AG04449 (cell line): ENCODE measurements at regions of chr2 and their contacts with region 1.

Region 1: GRCh38 chr2:96509114-96509846 is 4.1 kb upstream of the NEURL3 start:
- DNase-seq: peak; percentile 17
- H3K4me3 ChIP-seq: no peak overlapping the region
- CTCF ChIP-seq: peak; percentile 99

Region 2: DNA sequence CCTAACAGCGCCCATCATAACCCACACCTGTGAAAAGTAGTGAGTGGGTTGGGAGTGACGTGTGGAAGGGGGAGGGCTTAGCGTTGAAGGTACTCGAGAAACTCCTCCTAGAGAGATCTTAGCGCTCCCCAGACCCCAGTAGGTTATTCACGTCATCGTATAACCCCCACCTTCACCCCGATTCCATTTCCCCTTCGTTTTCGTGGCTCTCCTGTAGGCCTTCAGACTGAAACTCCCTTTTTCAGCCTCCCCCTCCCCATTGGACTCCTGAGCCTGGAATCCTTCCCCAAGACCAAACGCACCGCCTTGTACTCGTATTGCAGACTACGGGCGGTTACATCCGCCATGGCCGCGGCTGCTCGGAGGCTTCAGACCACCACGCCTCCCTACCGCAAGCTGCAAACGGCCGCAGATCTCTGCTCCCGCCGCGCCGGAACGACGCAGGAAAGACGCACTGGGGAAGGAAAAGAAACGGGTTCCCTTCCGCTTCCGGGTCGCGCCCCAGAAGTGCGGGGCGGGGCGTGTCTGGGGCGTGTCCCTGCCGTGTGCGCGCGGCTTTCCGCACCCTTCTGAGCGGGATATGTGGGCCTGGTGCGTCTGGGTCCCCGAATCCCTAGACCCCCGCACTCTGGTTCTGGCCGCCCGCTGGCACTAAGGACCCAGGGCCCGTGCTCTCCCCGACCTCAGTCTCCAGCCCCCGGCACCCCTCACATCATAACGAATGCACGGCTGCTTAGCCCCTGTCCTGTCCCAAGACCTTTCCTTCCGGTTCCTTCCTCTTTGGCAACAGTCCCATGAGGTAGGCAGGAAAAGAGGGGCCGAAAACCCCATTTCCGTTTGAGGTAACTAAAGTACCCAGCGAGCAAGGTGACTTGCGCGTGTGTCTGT is 203.9 kb before region 1 on chr2 and contains the start of gene SNRNP200:
- CTCF ChIA-PET with region 1: interaction called, 18 read pairs
- POLR2A ChIA-PET with region 1: no interaction called
- DNase-seq: no peak
- H3K4me3 ChIP-seq: peak within 1 kb of the TSS; percentile 99
- CTCF ChIP-seq: no peak

Region 3: GRCh38 chr2:96407041-96407918 is 102.0 kb before region 1 on chr2:
- CTCF ChIA-PET with region 1: interaction called, 340 read pairs
- POLR2A ChIA-PET with region 1: no interaction called
- DNase-seq: peak; percentile 33
- H3K4me3 ChIP-seq: no peak overlapping the region
- CTCF ChIP-seq: peak; percentile 84

Region 4: DNA sequence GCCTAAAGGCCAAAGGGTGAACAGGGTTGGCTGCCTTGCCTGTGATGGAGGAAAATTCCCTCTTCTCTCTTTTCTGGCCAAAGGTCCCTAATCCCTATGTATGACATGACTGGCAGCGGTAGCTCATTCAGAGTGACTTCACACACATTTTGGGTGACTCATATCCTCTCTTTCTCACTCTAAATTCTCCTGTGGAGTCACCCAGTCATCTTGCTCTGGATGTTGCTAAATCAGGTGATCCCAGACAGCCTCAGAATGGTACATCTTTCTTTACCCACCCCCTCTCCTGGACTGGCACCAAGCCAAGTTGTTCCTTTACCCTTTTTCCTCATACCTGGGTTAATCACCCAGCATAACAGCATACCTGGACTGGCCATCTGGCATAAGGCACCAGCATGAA is 81.4 kb before region 1 on chr2:
- CTCF ChIA-PET with region 1: interaction called, 13 read pairs
- POLR2A ChIA-PET with region 1: no interaction called
- DNase-seq: peak; percentile 28
- H3K4me3 ChIP-seq: no peak overlapping the region
- CTCF ChIP-seq: no peak

Region 5: DNA sequence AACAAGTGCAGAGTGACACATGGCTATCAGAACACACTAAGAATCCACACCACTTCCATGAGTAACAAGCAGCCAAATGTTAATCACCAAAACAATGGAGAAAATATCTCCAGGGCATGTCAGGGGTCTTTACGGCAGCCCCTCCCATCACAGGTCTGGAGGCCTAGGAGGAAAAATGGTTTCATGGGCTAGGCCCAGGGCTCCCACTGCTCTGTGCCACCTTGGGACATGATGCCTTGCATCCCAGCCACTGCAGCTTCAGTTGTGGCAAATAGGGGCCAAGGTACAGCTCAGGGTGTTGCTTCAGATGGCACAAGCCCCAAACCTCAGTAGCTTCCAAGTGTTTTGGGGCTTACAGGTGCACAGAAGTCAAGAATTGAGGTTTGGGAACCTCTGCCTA is 70.7 kb before region 1 on chr2:
- CTCF ChIA-PET with region 1: no interaction called
- POLR2A ChIA-PET with region 1: no interaction called
- DNase-seq: no peak
- H3K4me3 ChIP-seq: no peak overlapping the region
- CTCF ChIP-seq: no peak

Region 6: DNA sequence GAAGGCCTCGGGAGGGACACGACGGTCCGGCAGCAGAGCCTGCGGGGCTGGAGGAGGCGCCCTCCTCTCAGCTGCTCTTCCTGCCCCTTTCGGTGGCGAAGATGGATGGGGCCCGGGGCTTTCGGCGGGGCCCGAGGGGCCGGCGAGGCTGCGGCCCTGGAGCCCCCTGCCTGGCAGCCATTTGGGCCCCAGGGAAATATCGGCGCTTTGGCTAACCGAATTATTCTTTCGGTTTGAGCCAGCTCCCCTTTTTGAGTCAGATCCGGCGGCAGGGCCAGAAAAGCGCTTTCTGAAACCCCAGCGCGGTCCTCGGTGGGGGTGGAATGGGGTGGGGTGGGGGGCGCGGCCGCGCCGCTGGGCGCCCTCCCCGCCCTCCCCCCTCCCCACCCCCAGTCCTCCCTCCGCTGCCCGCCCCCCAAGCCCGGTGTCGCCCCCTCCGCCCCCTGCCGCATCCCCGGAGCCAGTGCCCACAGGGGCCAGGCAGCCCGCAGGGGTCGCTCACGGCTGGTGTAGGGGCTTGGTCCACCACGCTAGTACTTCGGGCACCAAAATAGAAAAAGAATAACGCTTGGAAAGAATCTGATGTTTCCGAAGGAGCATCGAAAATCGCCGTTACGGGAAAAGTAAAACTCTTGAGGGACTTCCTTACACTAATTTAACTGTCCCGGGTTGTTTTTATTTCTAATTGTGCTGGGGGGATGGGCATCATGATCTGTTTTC is 18.2 kb after region 1 on chr2:
- CTCF ChIA-PET with region 1: interaction called, 98 read pairs
- POLR2A ChIA-PET with region 1: no interaction called
- DNase-seq: no peak
- H3K4me3 ChIP-seq: peak overlapping the region; percentile 47
- CTCF ChIP-seq: peak; percentile 65

Region 7: DNA sequence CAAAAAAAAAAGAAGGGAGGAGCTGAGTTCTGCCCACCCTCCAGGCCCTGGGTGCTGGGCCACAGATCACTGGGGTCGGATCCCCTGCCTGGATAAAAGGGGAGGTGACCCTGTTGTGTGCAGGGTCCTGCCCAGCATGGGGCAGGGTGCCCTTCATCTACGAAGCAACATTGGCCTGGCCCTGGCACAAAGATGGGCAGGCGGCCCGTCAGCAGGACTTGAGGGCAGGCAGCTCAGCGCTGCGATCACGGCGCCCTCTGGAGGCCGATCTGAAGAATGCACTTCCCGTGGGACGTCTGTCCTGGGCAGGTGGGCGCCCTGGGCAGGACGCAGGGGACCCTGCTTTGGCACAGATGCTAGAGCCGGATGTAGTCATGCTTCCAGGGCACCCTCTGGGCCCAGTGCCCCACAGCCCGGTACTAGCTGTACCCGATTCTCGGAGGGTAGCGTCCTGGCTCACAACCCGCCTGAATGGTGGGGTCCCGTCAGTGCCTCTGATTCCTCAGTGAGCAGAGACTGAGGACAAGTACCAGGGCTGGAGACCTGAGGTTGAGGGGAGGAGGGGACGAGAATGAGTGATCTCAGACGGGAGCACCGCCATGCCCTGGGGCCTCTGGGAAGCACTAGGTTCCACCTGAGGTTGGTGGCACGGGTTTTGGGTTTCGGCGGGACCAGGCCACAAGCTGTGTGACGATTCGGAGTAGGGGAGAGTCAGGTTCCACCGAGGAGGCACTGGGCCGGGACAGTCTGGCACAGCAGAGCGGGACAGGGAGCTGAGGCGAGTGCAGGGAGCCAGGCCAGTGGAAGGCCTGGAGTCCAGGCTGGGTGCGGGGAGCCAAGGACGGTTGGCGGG is 45.2 kb after region 1 on chr2:
- CTCF ChIA-PET with region 1: interaction called, 17 read pairs
- POLR2A ChIA-PET with region 1: no interaction called
- DNase-seq: no peak
- H3K4me3 ChIP-seq: no peak overlapping the region
- CTCF ChIP-seq: peak; percentile 96

Region 8: DNA sequence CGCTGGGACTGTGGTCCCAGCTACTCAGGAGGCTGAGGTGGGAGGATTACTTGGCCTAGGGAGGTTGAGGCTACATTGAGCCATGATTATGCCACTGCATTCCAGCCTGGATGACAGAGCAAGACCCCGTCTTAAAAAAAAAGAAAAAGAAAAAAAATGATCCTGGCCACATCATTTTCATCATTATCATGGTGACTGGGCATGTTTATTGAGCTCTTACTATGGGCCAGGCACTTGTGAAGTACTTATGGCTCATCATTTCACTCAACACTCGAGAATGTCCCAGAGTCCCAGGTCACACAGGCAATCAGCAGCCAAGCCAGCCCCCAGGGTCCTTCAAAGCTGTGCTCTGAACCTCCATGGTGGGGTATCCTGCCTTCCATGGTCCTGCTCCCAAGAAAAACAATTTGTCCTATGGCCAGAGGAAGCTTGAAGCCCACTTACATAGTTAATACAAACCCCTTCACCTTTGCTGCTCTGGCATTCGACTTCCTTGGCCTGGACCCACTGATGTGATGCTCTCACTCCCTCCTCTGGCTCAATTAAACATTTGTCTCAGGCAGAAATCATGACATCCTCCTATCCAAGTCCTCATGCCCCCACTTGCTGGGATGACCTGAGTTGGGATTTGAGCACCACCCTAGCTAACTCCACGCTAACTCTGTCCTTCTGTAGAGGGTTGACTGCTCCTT is 247.7 kb after region 1 on chr2:
- CTCF ChIA-PET with region 1: no interaction called
- POLR2A ChIA-PET with region 1: no interaction called
- DNase-seq: no peak
- H3K4me3 ChIP-seq: no peak overlapping the region
- CTCF ChIP-seq: no peak

Region 9: DNA sequence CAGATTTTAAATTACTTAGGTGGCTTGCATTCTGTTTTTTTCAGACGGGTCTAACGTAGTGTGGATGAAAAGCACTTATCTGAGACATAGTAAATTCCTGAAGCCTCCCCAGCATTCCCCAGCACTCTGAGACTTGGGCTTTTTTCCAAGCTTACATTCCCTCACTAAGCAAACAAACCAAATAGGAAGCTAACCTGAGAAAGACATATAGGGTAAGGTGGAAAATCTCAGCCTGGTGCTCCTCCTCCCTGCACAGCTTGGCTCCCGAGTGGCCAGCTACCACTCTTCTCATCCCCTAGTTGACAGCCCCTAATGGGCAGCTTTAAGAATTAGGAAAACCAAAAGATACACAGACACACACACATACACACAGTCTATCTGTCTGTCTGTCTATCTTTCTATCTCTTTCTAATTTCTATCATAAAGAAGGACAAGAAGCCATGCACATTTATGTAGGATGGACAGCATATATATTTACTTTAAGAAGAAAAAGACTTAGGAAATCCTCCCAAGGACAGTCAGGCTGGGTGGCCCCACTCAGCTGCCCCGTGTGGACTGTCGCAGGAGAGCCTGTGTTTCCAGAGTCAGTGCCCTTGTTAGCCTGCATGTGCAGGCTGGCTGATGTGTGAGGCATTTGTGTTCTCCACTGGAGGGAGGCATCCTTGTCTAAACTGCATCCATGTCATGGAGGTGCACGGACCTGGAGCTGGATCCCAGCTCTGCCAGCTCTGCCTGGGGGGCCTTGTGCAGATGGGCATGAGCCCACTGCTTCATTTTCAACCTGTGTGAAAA is 315.0 kb after region 1 on chr2:
- CTCF ChIA-PET with region 1: no interaction called
- POLR2A ChIA-PET with region 1: no interaction called
- DNase-seq: peak; percentile 44
- H3K4me3 ChIP-seq: no peak overlapping the region
- CTCF ChIP-seq: no peak